Activated CD4-positive, alpha-beta memory T cell treated with anti-CD3 and anti-CD28 coated beads for 36 hours (primary cell): ENCODE measurements at regions of chr17 and their contacts with region 1.

Region 1: DNA sequence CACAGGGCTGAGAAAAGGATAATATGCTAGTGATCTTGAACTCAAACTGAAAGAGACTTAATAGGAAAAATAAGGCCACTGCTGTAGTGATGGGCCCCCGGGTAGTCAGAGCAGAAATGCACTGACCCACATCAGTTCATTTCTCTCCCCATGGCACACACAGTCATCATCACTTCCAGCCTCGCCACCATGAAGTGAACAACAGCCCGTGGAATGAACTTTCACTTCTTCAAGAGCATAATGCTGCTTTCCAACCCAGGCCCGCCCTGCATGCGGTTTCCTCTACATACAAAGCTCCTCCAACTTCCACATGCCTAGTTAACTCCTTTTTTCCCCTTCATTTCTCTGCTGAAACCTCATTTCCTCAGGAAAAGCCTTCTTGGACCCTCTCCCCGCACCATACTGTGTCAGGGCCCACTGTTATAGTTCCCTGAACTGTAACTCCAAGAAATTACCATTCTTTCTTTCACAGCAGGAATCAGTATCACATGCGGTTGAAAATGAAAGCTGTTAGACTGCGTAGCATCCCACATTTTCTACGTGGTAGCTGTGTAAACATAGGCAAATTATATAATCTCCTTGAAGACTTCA is 65.8 kb upstream of the SMIM36 start:
- DNase-seq: peak; percentile 80
- H3K4me3 Mint-ChIP-seq: no peak overlapping the region
- H3K27ac Mint-ChIP-seq: no peak overlapping the region
- H3K4me1 Mint-ChIP-seq: peaks cover 31% of the 10 kb centered on the region
- H3K27me3 Mint-ChIP-seq: no peaks in the 10 kb centered on the region

Region 2: GRCh38 chr17:55410722-55411462 is 166.2 kb before region 1 on chr17:
- CTCF ChIA-PET with region 1: no interaction called
- POLR2A ChIA-PET with region 1: no interaction called
- intact Hi-C with region 1: no loop called
- DNase-seq: no peak
- H3K4me3 Mint-ChIP-seq: no peak overlapping the region
- H3K27ac Mint-ChIP-seq: no peak overlapping the region
- H3K4me1 Mint-ChIP-seq: peaks cover 5% of the 10 kb centered on the region
- H3K27me3 Mint-ChIP-seq: no peaks in the 10 kb centered on the region

Region 3: DNA sequence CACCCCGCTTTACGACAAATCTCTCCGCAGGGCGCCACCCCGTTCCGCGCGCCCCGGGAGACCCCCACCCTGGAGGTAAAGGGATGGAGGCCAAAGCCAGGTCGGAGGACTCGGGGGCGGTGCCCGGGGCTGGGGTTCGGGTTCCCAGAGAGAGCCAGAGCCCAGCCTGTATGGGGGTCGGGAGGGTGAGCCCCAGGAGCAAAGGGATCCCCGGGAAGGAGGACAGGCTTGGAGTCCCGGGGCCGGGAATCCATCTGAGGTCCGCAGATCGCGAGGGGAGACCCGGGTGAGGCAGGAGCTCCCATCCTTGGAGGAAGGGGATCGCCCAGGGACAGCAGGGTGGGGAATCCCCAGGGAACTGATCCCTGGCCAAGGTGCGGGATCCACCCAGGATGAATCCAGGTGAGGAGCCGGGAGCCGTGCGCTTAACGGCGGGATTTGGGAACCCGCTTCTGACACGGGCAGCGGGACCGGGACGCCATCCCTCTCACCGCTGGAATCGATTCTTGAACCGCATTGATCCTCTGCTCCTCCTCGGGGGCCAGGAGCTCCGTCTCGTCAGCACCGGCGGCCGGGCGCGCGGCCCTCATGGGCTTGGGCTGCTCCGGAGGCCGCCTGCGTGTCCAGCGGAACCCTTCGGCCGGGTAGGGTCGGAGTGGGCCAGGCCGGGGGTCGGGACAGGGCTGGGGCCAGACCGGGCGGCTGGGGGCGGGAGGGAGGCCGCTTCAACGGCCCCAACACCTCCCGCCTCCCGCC is 155.7 kb before region 1 on chr17 and contains the start of gene MMD:
- CTCF ChIA-PET with region 1: no interaction called
- POLR2A ChIA-PET with region 1: no interaction called
- intact Hi-C with region 1: loop called (anchors 5 kb)
- DNase-seq: no peak
- H3K4me3 Mint-ChIP-seq: peak within 1 kb of the TSS; percentile 89
- H3K27ac Mint-ChIP-seq: peak within 1 kb of the TSS; percentile 93
- H3K4me1 Mint-ChIP-seq: peaks cover 42% of the 10 kb centered on the region
- H3K27me3 Mint-ChIP-seq: peaks cover 19% of the 10 kb centered on the region
- total RNA-seq, gene MMD: 22.1 to 24.2 TPM

Region 4: GRCh38 chr17:55527540-55528118 is 49.5 kb before region 1 on chr17:
- CTCF ChIA-PET with region 1: interaction called, 7 read pairs
- POLR2A ChIA-PET with region 1: interaction called, 4 read pairs
- intact Hi-C with region 1: loop called (anchors 1 kb)
- DNase-seq: peak; percentile 31
- H3K4me3 Mint-ChIP-seq: no peak overlapping the region
- H3K27ac Mint-ChIP-seq: no peak overlapping the region
- H3K4me1 Mint-ChIP-seq: peaks cover 10% of the 10 kb centered on the region
- H3K27me3 Mint-ChIP-seq: peaks cover 4% of the 10 kb centered on the region

Region 5: DNA sequence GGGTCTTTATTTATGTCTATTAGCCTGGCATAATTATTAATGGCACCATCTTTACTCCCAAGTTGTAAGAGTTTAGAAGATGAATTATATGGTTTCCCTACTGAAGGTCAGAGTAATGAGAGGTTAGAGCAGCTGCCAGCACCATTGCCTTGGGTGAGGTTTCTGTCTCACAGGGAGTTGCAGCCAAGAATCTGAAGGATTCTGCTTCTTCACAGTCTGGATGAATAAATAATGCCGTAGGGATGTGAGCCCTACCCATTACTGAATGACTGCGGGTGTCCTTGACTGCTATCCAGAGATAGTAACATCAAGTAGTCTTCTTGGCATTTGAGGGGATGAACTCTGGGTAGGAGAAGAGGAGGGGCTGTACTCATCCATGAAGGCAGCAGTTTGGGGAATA is 13.0 kb before region 1 on chr17:
- CTCF ChIA-PET with region 1: interaction called, 9 read pairs
- POLR2A ChIA-PET with region 1: interaction called, 6 read pairs
- intact Hi-C with region 1: loop called (anchors 1 kb)
- DNase-seq: no peak
- H3K4me3 Mint-ChIP-seq: no peak overlapping the region
- H3K27ac Mint-ChIP-seq: no peak overlapping the region
- H3K4me1 Mint-ChIP-seq: peaks cover 33% of the 10 kb centered on the region
- H3K27me3 Mint-ChIP-seq: peaks cover 5% of the 10 kb centered on the region

Region 6: GRCh38 chr17:55625521-55625920 is 48.4 kb after region 1 on chr17:
- CTCF ChIA-PET with region 1: interaction called, 4 read pairs
- POLR2A ChIA-PET with region 1: interaction called, 9 read pairs
- intact Hi-C with region 1: loop called (anchors 2 kb)
- DNase-seq: peak; percentile 52
- H3K4me3 Mint-ChIP-seq: no peak overlapping the region
- H3K27ac Mint-ChIP-seq: no peak overlapping the region
- H3K4me1 Mint-ChIP-seq: peaks cover 19% of the 10 kb centered on the region
- H3K27me3 Mint-ChIP-seq: peaks cover 16% of the 10 kb centered on the region

Region 7: DNA sequence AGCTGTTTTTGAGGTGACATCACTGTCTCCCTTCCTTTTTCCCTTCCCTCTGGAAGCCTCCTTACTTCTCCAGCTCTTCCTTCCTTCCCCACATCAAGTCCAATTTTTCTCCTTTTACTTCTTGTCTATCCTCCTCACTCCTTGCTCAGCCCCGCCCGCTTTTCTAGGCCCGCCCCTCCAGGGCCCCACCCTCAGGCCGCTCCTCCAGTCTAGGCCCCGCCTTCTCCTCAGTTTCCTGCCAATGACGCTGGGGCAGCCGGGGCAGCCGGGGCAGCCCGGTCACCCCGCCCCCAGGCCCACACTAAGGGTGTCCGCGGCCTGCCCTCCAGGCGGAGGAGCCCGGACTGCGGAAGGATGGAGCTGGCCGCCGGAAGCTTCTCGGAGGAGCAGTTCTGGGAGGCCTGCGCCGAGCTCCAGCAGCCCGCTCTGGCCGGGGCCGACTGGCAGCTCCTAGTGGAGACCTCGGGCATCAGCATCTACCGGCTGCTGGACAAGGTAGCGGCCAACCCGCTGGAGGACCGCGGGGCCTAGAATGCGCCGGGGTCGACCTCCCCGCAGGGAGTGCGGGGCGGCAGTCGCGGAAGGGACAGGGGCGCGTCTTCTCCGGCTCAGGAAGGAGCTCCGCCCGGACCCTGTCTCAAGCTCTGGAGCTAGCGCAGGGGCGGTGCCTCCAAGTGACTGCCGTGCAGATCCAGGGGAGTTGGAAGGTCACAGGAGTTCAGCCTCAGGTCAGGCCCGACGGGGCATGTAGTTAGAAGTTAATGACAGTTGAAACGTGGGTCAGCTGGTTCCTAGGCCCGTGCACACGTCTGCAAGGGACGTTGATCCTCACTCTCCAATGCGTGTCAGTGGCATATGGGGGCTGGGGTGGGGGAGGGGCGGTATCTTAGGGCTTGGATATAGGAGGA is 173.9 kb after region 1 on chr17 and contains the start of gene PCTP:
- CTCF ChIA-PET with region 1: no interaction called
- POLR2A ChIA-PET with region 1: no interaction called
- intact Hi-C with region 1: loop called (anchors 5 kb)
- DNase-seq: peak; percentile 93
- H3K4me3 Mint-ChIP-seq: peak within 1 kb of the TSS; percentile 75
- H3K27ac Mint-ChIP-seq: no peak within 1 kb of the TSS
- H3K4me1 Mint-ChIP-seq: peaks cover 14% of the 10 kb centered on the region
- H3K27me3 Mint-ChIP-seq: peaks cover 18% of the 10 kb centered on the region
- total RNA-seq, gene PCTP: 9.3 to 9.8 TPM